ENCODE measurements at regions of chr15 and their contacts with region 1.

Region 1: DNA sequence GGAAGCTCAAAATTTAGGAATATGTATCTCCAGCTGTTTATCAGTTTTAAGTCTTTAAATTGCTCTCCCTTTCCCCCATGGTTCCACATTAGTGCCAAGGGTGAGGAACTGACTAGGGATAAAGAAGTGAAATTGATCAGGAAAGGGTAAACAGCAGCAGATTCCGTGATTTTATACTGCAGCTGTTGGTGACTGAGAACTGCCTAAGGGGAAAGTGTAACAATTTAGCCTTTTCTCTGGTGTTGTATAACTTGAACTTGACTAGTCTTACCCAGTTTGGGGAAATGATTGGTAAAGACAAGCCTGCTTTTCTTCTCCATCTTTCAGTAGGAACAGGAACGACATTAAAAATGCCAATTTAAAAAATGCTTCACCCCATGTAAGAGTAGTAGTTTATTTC is 5.0 kb downstream of the SPRED1 start:
- DNase-seq: no peak
- H3K4me3 ChIP-seq: no peak overlapping the region
- H3K27ac ChIP-seq: peak overlapping the region in 1 of 8 donors; percentile 2
- H3K4me1 ChIP-seq: peaks cover 5 to 46% (median 21%) of the 10 kb centered on the region in 6 donors
- H3K27me3 ChIP-seq: peaks cover 0 to 7% (median 0%) of the 10 kb centered on the region in 7 donors
- CTCF ChIP-seq: no peak
- POLR2A ChIP-seq: no peak

Region 2: GRCh38 chr15:37941779-37942178 is 315.9 kb before region 1 on chr15:
- intact Hi-C with region 1: no loop called
- DNase-seq: no peak
- H3K4me3 ChIP-seq: no peak overlapping the region
- H3K27ac ChIP-seq: no peak overlapping the region
- H3K4me1 ChIP-seq: no peaks in the 10 kb centered on the region
- H3K27me3 ChIP-seq: no peaks in the 10 kb centered on the region
- CTCF ChIP-seq: no peak
- POLR2A ChIP-seq: no peak

Region 3: DNA sequence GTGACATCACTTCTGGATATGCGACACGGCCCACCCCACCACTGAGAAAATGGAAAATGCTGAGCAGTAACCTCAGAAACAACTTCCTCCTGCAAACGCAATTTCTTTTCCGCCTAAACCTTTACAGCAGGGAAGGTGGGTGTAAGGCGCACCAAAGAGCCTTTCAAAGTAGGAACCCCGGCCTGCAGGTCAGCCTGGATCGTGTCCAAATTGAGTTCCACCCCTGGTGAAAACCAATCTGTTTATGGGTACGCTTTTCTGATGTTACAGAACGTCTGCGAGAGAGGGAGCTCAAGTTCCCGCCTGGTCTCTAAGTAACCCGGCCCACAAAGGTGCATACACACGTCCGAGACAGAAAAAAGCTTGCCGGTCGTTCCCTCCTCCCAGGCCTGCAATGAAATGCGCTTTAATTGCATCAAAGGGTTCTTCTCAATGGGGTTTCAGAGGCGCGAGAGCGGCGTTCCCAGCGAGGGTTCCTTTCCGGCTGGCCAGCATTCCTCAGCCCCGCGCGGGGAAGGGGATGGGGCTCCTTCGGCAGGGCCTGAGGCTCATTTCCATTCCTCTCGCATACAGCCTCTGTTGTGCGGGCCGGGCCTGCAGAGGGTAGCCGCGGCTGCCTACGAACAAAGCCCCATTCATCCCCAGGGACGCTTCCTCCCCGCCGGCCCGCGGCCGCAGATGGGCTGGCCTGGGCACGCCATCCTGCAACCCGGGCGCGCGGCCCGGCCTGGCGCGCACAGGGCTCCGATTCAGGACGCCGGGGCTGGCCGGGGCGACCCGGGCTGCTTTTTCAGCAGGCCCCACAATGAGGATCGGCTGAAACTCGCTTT is 185.1 kb before region 1 on chr15:
- intact Hi-C with region 1: loop called (anchors 5 kb)
- DNase-seq: peak; percentile 85
- H3K4me3 ChIP-seq: peak overlapping the region; percentile 19 to 77 (median 52)
- H3K27ac ChIP-seq: peak overlapping the region in 7 of 8 donors; percentile 79 to 88 (median 85)
- H3K4me1 ChIP-seq: peaks cover 19 to 72% (median 43%) of the 10 kb centered on the region in 6 donors
- H3K27me3 ChIP-seq: peaks cover 0 to 24% (median 5%) of the 10 kb centered on the region in 7 donors
- CTCF ChIP-seq: no peak
- POLR2A ChIP-seq: no peak

Measured in spleen (tissue), 13 donors.